ENCODE measurements at regions of chr20 and their contacts with region 1.

Region 1: GRCh38 chr20:32652739-32653526 is 20.8 kb downstream of the C20orf203 start:
- DNase-seq: peak; percentile 91
- ATAC-seq: peak; percentile 96
- H3K4me3 ChIP-seq: no peak overlapping the region
- H3K27ac ChIP-seq: no peak overlapping the region
- H3K4me1 ChIP-seq: peaks cover 4% of the 10 kb centered on the region
- H3K27me3 ChIP-seq: no peaks in the 10 kb centered on the region
- CTCF ChIP-seq: peak; percentile 93

Region 2: DNA sequence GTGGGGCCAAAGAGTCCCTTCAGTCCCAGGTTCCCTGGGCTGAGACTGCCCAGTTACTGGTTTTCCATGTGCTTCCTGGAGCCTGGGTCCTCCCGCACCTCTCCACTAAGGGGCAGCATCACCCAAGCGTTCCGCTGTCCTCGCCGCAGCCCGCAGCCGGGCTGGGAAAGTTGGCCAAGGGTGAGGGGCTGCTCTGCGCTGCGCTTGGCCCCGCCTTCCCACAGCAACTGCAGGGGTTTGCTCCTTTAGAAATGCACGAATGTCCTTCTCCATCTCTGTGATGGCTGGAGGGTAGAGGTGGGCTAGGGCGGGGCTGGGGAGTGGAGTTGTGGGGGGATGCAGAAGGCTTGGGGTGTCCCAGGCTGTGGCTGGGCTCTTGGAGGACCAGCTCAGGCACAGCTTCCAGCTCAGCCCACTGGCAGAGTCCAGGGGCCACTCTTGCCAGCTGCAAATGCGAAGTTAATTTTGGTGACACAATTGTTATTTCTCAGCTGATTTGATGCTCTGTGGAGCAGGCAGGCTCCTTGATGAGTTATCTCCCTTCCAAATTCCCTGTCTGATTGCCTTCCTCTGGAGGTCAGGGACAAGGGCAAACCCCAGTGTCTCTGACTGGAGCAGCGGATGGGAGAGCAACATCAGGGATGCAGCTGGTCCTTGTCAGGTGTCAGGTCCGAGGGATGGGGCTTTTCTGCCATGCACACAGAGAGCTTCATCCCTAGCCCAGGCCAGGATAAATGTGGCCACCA is 131.0 kb before region 1 on chr20:
- intact Hi-C with region 1: loop called (anchors 5 kb)
- DNase-seq: peak; percentile 82
- ATAC-seq: peak; percentile 83
- H3K4me3 ChIP-seq: no peak overlapping the region
- H3K27ac ChIP-seq: no peak overlapping the region
- H3K4me1 ChIP-seq: peaks cover 12% of the 10 kb centered on the region
- H3K27me3 ChIP-seq: no peaks in the 10 kb centered on the region
- CTCF ChIP-seq: peak; percentile 81